ENCODE measurements at regions of chr19 and their contacts with region 1.

Region 1: DNA sequence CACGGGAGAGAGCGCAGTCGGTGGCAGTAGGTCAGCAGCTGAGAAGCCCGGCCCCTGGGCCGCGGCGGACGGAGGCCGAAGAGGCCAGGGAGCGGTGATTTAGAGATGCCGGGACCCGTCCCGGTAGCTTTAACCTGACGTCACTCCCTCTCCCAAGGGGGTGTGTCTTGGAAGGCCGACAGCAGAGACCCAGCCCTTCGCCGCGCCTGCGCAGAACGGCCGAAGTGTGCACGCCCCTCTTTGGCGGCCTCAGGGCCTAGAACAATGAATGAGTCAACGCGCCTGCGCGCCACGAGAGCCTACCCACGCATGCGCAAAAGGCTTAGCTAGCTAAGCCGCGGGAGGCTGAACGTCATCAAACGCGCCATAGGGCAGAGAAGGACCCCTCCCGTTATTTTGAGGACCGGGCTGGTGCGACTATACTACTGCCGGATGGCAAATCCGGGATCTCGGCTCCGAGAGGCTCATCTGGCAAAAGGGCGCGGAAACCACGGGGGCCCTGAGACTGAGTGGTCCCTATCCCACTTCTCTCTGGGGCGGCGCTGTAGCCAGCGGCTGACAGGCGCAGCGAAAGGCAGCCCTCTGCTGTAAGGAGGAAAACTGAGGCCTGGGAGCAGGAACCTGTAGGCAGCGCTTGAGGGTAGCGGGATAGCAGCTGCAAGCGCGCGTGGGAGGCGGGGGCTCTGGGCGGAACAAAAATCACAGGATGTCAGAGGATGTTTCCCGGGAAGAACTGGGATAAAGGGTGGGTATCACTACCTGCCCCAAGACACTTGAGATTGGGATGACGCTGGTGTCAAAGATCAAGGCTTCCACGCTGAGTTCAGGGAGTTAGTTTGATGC is at the starts of genes IRGQ and ZNF576:
- DNase-seq: peak; percentile 100
- ATAC-seq: peak; percentile 84
- H3K4me3 Mint-ChIP-seq: peak within 1 kb of the TSS; percentile 86
- H3K27ac Mint-ChIP-seq: peak within 1 kb of the TSS; percentile 98
- H3K4me1 Mint-ChIP-seq: peaks cover 26% of the 10 kb centered on the region
- H3K27me3 Mint-ChIP-seq: no peaks in the 10 kb centered on the region
- CTCF ChIP-seq: no peak
- total RNA-seq, gene IRGQ: 17.1 to 17.9 TPM
- total RNA-seq, gene ZNF576: 8.8 to 12.2 TPM

Region 2: DNA sequence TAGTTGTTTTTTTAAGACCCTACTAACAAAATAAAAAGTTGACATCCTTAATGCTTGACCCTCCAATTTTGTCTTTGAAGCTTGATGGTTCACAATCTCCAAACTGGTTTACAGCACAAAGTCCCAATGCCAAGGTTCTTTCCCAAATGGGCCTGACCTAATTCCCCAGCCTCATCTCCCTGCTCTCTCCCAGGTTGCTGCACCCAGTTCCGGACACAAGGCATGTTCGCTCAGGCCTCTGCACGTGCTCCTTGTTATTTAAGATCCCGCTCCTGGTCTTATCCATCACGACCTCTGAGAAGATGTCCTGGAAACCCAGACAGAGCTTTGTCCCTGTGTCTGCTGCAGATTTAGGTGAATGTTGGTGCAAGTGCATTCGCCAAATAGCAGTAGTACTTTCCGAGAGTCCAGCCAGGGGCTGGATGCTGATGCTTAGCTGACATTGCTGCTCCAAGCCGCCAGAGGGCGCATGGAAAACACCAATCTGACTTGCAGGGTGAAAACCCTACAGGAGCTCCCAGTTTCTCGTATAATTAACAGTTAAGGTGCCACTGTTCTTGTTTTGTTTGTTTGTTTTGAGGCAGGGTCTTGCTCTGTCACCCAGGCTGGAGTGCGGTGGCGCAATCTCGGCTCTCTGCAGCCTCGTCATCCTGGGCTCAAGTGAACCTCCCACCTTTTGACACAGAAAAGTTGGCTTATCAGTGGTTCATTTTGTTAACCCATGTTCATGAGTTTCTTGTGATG is 149.3 kb before region 1 on chr19:
- CTCF ChIA-PET with region 1: interaction called, 27 read pairs
- POLR2A ChIA-PET with region 1: no interaction called
- intact Hi-C with region 1: loop called (anchors 5 kb)
- DNase-seq: peak; percentile 84
- ATAC-seq: peak; percentile 91
- H3K4me3 Mint-ChIP-seq: no peak overlapping the region
- H3K27ac Mint-ChIP-seq: no peak overlapping the region
- H3K4me1 Mint-ChIP-seq: peaks cover 18% of the 10 kb centered on the region
- H3K27me3 Mint-ChIP-seq: no peaks in the 10 kb centered on the region
- CTCF ChIP-seq: peak; percentile 94

Region 3: DNA sequence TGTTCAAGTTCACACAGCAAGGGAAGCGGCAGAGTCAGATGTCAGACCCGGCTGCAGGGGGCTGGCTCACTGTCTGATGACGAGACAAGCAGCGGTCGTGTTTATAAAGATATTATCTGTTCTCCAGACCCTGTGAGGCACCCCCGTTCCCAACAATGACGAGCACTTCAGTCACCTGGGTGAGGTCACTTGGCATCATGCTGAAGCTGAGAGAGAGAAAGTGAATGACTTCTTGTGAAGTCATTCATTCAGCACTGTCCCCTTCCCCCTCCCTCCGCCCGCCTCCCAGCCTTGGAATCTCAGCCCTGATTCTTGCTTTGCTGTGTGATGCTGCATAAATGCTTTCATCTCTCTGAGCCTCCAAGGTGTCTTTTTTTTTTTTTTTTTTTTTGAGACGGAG is 125.9 kb before region 1 on chr19:
- CTCF ChIA-PET with region 1: no interaction called
- POLR2A ChIA-PET with region 1: no interaction called
- intact Hi-C with region 1: no loop called
- DNase-seq: peak; percentile 78
- ATAC-seq: peak; percentile 67
- H3K4me3 Mint-ChIP-seq: peak overlapping the region; percentile 34
- H3K27ac Mint-ChIP-seq: peak overlapping the region; percentile 77
- H3K4me1 Mint-ChIP-seq: peaks cover 62% of the 10 kb centered on the region
- H3K27me3 Mint-ChIP-seq: no peaks in the 10 kb centered on the region
- CTCF ChIP-seq: no peak

Region 4: GRCh38 chr19:43489310-43489709 is 106.9 kb before region 1 on chr19:
- CTCF ChIA-PET with region 1: no interaction called
- POLR2A ChIA-PET with region 1: no interaction called
- intact Hi-C with region 1: no loop called
- DNase-seq: no peak
- ATAC-seq: no peak
- H3K4me3 Mint-ChIP-seq: no peak overlapping the region
- H3K27ac Mint-ChIP-seq: peak overlapping the region; percentile 55
- H3K4me1 Mint-ChIP-seq: peaks cover 6% of the 10 kb centered on the region
- H3K27me3 Mint-ChIP-seq: no peaks in the 10 kb centered on the region
- CTCF ChIP-seq: no peak

Region 5: GRCh38 chr19:43526884-43527859 is 69.0 kb before region 1 on chr19 and contains the start of gene ETHE1:
- CTCF ChIA-PET with region 1: interaction called, 75 read pairs
- POLR2A ChIA-PET with region 1: interaction called, 6 read pairs
- intact Hi-C with region 1: loop called (anchors 10 kb)
- DNase-seq: peak; percentile 85
- ATAC-seq: peak; percentile 76
- H3K4me3 Mint-ChIP-seq: peak within 1 kb of the TSS; percentile 93
- H3K27ac Mint-ChIP-seq: peak within 1 kb of the TSS; percentile 97
- H3K4me1 Mint-ChIP-seq: peaks cover 25% of the 10 kb centered on the region
- H3K27me3 Mint-ChIP-seq: no peaks in the 10 kb centered on the region
- CTCF ChIP-seq: no peak
- total RNA-seq, gene ETHE1: 50.9 to 57.1 TPM

Region 6: DNA sequence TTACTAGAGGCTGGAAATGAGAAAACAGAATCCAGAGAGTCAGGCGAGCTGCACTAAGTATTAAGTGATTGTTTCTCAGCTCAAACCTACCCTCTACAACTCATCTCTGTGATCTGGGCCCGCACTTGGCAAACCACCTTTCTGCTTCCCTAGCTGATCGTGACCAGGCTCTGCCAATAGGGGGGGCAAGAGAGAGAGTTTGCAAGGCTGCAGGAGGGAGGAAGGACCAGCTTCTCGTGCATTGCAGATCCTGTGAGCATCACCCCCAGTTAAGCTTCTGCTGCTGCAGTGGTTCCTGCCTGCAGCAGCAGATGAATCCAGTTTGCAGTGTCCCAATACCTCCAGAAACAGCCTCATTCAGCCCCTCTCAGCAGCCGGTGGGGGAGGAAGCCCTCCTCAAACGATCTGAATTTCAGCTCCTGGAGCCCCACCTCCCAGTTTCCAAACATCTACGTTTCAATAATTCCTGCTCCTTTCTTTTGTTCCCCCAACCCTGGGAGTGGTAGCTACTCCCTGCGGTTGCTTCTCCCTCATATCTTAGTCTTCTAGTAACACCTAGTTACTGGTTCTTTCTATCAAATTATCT is 40.9 kb before region 1 on chr19:
- CTCF ChIA-PET with region 1: interaction called, 188 read pairs
- POLR2A ChIA-PET with region 1: interaction called, 24 read pairs
- intact Hi-C with region 1: loop called (anchors 5 kb)
- DNase-seq: peak; percentile 91
- ATAC-seq: peak; percentile 99
- H3K4me3 Mint-ChIP-seq: no peak overlapping the region
- H3K27ac Mint-ChIP-seq: no peak overlapping the region
- H3K4me1 Mint-ChIP-seq: peaks cover 6% of the 10 kb centered on the region
- H3K27me3 Mint-ChIP-seq: no peaks in the 10 kb centered on the region
- CTCF ChIP-seq: peak; percentile 68

Region 7: DNA sequence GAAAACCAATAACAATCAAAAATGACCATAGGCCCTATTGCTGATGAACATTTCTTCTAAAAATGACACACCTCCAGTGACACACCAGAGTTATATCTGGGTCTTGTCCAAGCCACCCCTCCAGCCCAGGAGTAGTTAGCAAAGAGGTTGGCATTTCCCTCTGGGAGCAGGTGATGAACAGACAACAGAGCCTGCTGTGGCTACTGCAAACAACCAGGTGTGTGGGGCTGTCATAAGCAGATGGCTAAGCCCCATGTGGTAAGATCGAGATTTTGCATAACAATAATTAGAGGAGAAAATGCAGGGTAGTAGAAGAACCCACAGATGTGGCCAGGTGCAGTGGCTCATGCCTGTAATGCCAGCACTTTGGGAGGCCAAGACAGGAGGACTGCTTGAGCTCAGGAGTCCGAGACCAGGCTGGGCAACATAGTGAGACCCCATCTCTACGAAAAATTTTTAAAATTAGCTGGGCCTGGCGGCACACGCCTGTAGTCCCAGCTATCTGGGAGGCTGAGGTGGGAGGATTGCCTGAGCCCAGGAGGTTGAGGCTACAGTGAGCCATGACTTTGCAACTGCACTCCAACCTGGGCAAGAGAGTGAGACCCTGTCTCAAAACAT is 25.9 kb before region 1 on chr19:
- CTCF ChIA-PET with region 1: interaction called, 62 read pairs
- POLR2A ChIA-PET with region 1: interaction called, 20 read pairs
- intact Hi-C with region 1: no loop called
- DNase-seq: no peak
- ATAC-seq: no peak
- H3K4me3 Mint-ChIP-seq: no peak overlapping the region
- H3K27ac Mint-ChIP-seq: peak overlapping the region; percentile 4
- H3K4me1 Mint-ChIP-seq: peaks cover 26% of the 10 kb centered on the region
- H3K27me3 Mint-ChIP-seq: no peaks in the 10 kb centered on the region
- CTCF ChIP-seq: no peak

Region 8: DNA sequence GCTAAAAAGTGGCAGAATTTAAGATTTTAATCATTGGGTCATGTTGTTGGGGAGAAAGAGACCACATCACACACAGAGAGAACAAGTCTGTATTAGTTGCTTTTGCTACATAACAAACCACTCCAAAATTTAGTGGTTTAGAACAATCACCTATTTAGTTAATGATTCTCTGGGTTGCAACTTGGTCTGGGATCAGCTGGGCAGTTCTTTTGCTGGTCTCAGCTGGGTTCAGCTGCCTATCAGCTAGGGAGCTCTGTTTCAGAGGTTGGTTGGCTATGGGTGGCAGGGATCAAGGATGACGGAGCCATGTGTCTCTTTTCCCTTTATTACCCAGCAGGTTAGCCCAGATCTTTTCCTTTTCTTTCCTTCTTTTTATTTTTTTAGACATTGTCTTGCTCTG is 11.7 kb before region 1 on chr19:
- CTCF ChIA-PET with region 1: interaction called, 26 read pairs
- POLR2A ChIA-PET with region 1: interaction called, 10 read pairs
- intact Hi-C with region 1: no loop called
- DNase-seq: no peak
- ATAC-seq: no peak
- H3K4me3 Mint-ChIP-seq: no peak overlapping the region
- H3K27ac Mint-ChIP-seq: peak overlapping the region; percentile 35
- H3K4me1 Mint-ChIP-seq: peaks cover 12% of the 10 kb centered on the region
- H3K27me3 Mint-ChIP-seq: no peaks in the 10 kb centered on the region
- CTCF ChIP-seq: no peak

Region 9: DNA sequence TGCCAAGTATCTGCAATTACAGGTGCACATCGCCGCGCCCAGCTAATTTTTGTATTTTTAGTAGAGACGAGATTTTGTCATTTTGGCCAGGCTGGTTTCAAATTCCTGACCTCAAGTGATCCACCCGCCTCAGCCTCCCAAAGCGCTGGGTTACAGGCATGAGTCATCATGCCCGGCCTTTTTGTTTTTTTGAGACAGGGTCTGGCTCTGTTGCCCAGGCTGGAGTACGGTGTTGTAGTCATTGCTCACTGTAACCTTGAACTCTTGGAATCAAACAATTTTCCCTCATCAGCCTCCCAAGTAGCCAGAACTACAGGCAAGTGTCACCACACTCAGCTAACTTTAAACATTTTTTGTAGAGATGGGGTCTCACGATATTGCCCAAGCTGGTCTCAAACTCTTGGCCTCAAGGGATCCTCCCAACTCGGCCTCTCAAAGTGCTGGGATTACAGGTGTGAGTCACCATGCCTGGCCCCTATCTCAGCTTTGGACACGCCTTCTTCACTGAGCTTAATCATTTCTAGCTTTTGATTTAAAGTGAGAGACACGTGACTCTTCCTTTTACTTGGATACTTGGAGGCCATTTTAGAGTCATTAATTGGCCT is 115.6 kb after region 1 on chr19:
- CTCF ChIA-PET with region 1: no interaction called
- POLR2A ChIA-PET with region 1: no interaction called
- intact Hi-C with region 1: no loop called
- DNase-seq: no peak
- ATAC-seq: no peak
- H3K4me3 Mint-ChIP-seq: no peak overlapping the region
- H3K27ac Mint-ChIP-seq: no peak overlapping the region
- H3K4me1 Mint-ChIP-seq: no peaks in the 10 kb centered on the region
- H3K27me3 Mint-ChIP-seq: peaks cover 6% of the 10 kb centered on the region
- CTCF ChIP-seq: no peak

Region 10: DNA sequence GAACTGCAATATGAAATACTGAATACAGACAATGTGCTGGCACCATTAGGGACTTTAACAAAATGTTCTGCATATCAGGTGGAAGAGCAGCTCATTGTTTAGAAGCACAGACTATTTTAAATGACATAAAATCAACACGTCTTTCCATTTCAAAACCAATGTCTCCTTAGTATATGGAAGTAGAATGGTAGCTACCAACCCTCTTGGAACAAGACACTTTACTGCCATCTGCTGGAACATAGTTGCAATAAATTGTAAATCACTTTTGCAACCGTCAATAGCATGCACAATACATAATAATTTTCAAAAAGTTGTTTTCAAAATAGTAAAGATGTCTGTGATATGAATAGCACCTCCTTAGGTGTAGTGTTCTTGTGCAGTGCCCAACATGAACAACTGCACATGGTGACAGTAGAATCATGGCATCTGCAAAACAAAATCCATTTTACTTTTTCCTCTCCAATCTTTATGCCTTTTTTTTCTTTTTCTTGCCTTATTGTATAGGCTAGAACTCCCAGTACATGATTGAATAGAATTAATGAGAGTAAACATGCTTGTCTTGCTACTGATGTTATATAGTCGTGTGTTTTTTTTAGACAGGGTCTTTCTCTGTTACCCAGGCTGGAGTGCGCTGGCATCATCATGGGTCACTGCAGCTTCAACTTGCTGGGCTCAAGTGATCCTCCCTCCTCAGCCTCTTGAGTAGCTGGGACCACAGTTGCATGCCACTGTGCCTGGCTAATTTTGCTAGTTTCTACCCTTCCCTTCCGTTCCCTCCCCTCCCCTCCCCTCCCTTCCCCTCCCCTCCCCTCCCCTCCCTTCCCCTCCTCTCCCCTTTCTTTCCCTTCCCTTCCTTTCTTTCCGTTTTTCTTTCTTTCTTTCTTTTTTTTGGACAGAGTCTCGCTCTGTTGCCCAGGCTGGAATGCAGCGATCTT is 213.8 kb after region 1 on chr19:
- CTCF ChIA-PET with region 1: interaction called, 11 read pairs
- POLR2A ChIA-PET with region 1: no interaction called
- intact Hi-C with region 1: no loop called
- DNase-seq: no peak
- ATAC-seq: peak; percentile 70
- H3K4me3 Mint-ChIP-seq: no peak overlapping the region
- H3K27ac Mint-ChIP-seq: no peak overlapping the region
- H3K4me1 Mint-ChIP-seq: no peaks in the 10 kb centered on the region
- H3K27me3 Mint-ChIP-seq: peaks cover 7% of the 10 kb centered on the region
- CTCF ChIP-seq: peak; percentile 74